ENCODE measurements at regions of chr6 and their contacts with region 1.

Region 1: DNA sequence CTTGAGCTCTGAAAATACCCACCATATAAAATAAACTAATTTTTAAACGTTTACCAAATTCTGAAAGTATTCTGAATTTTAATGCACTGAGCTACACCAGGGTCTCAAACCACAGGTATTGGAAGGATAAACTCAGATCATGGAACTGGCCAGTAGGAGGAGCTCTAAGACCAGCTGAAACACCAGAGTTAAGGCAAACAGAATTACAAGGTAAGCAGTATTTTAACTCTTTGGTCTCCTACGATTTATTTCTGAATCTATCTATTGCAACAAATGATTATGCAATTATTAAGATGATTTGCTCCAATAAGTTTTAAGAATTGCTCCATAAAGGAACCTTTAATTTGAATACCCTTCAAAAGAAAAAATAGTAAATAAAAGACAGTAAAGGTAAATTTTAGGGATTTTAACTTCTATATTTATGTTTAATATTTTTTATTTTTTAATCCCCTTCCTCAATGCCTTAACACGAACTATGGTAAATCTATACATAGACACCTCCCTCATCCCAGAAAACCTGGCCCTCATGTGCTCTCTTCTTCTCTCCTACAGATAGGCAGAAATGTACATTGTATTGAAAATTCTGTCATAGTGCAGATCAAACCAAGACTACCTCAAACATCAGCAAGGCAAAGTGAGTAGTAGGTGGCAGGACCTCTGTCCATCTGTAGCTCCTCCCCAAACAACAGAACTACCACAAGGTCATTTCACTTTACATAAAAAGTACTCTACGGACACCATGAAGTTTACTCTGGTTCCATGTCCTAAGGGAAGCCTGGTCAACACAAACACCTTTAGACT is 58.4 kb downstream of the SMLR1 start:
- DNase-seq: peak; percentile 87
- H3K4me3 ChIP-seq: no peak overlapping the region
- H3K27ac ChIP-seq: no peak overlapping the region
- H3K4me1 ChIP-seq: no peaks in the 10 kb centered on the region
- H3K27me3 ChIP-seq: no peaks in the 10 kb centered on the region
- CTCF ChIP-seq: peak; percentile 75 to 92 (median 83)
- POLR2A ChIP-seq: no peak

Region 2: GRCh38 chr6:130625825-130626527 is 259.6 kb before region 1 on chr6:
- intact Hi-C with region 1: no loop called
- DNase-seq: no peak
- H3K4me3 ChIP-seq: no peak overlapping the region
- H3K27ac ChIP-seq: no peak overlapping the region
- H3K4me1 ChIP-seq: no peaks in the 10 kb centered on the region
- H3K27me3 ChIP-seq: no peaks in the 10 kb centered on the region
- CTCF ChIP-seq: no peak
- POLR2A ChIP-seq: no peak

Region 3: GRCh38 chr6:131116749-131117360 is 231.3 kb after region 1 on chr6:
- intact Hi-C with region 1: loop called (anchors 10 kb)
- DNase-seq: no peak
- H3K4me3 ChIP-seq: no peak overlapping the region
- H3K27ac ChIP-seq: no peak overlapping the region
- H3K4me1 ChIP-seq: no peaks in the 10 kb centered on the region
- H3K27me3 ChIP-seq: no peaks in the 10 kb centered on the region
- CTCF ChIP-seq: peak; percentile 42 to 55 (median 53)
- POLR2A ChIP-seq: no peak

Region 4: GRCh38 chr6:131182991-131183425 is 297.4 kb after region 1 on chr6:
- intact Hi-C with region 1: no loop called
- DNase-seq: no peak
- H3K4me3 ChIP-seq: no peak overlapping the region
- H3K27ac ChIP-seq: no peak overlapping the region
- H3K4me1 ChIP-seq: no peaks in the 10 kb centered on the region
- H3K27me3 ChIP-seq: no peaks in the 10 kb centered on the region
- CTCF ChIP-seq: peak in 2 of 3 experiments; percentile 32 to 36
- POLR2A ChIP-seq: no peak

Measured in testis (tissue), 5 donors.